ENCODE measurements at regions of chr11 and their contacts with region 1.

Region 1: DNA sequence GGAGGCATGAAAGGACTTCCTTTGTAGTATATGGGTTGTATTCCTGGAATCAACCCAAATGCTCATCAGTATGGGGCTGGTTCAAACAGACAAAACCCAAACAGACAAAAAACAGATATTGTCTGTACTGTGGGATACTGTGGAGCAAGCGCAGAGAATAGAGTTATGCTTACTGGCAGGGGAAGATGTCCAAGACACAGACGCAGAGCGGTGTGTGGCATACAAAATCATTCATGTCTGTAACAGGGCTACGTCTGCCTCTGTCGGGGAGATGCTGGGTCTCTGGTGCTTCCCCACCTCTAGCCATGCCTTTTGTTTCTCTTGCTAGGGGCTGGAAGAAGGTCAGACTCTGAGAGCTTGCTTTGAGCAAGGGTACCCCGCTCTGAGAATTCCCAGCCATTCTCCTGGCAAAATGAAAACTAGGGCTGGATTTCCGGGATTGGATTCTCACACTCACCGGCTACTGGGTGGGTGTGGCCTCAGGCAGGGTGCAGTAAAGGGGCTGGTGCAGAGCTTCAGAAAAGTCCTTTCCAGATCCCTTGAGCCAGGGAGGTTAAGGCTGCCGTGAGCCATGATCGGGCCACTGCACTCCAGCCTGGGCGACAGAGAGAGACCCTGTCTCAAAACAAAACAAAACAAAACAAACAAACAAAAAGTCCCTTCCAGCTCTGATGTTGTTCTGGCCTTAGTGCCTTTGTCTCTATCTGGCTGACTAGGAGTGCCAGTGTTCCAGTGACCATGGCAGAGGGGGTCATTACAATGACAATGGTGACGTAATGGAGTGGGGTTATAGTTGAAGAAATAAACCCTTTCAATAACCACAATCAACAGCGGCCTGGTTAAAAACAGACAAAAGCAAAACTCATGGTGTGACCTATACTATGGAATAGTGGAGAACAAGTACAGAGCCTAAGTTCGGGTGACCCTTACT is 2.9 kb upstream of the ABCC8 start:
- ATAC-seq: peak; percentile 71 to 86 (median 82)
- H3K4me3 ChIP-seq: peak overlapping the region in 1 of 5 donors; percentile 15
- H3K27ac ChIP-seq: no peak overlapping the region
- H3K4me1 ChIP-seq: peaks cover 12 to 14% of the 10 kb centered on the region in 2 donors

Region 2: DNA sequence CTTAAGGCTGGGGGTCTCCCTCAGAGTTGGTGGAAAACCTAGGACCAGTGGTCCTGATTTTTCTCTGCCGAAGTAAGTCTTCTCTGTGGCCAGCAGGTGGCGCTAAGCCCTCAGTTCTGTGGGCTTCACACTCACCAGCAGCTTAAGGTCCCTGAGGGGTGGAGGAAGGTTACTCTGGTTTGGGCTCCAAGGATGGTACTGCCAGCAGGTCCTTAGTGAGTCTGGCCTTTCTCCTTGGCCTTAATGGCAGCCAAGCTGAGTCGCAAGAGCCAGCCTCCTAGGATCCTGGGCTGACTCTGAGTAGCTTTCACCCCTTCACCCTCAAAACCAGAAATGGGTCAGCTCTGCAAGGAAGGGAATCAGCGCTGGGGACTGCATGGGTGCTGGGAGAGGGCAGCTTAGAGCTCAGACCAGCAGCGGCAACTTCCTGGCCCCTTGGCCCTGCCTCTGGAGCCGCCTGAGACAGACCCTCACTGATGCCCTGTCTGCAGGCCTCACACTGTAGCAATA is 95.5 kb before region 1 on chr11:
- in situ Hi-C with region 1: loop called in 2 of 9 experiments (anchors 25 kb)
- ATAC-seq: peak; percentile 38 to 69 (median 56)
- H3K4me3 ChIP-seq: no peak overlapping the region
- H3K27ac ChIP-seq: no peak overlapping the region
- H3K4me1 ChIP-seq: no peaks in the 10 kb centered on the region

Region 3: DNA sequence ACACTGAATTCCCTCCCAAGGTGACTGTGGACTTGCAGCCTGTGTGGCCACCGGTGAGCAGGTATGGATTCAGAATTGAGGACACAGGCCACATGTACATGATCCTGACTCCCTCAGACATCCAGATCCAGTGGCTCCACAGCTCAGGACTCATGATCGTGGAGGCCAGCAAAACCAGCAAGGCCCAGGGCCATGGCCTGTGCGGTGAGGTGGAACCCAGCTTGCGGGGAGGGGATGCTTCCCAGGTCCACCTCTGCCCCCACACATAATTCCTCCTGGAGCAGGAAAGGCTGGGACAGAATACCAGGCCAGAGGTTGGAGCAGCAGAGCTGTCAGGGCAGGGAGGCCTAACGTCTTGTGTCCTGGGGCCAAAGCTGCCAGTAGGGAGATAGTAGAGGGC is 149.6 kb after region 1 on chr11:
- in situ Hi-C with region 1: no loop called
- ATAC-seq: no peak
- H3K4me3 ChIP-seq: no peak overlapping the region
- H3K27ac ChIP-seq: no peak overlapping the region
- H3K4me1 ChIP-seq: no peaks in the 10 kb centered on the region

Measured in motor neuron (in vitro differentiated cells).